MCF 10A (cell line): ENCODE measurements at regions of chr7 and their contacts with region 1.

Region 1: GRCh38 chr7:32357535-32358277 is 132.5 kb downstream of the LSM5 start:
- DNase-seq: peak; percentile 32
- H3K4me3 Mint-ChIP-seq: no peak overlapping the region
- H3K27ac Mint-ChIP-seq: no peak overlapping the region
- H3K4me1 Mint-ChIP-seq: no peaks in the 10 kb centered on the region
- H3K27me3 Mint-ChIP-seq: peaks cover 46% of the 10 kb centered on the region
- CTCF ChIP-seq: peak; percentile 39

Region 2: DNA sequence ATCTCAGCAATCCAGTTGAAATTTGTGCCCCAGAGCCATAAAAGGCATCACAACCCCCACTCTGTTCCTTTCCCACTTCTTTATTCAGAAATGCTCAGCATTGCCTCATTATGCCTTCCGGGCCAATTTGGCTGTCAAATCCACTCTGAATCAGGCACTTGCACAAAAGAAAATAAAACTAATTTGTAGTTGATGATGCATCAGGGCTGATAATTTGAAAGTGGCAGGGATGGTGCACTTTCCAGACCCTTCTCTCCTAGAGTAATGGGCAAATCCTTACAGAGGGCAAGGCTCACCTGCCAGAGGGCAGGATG is 139.6 kb before region 1 on chr7:
- CTCF ChIA-PET with region 1: interaction called, 619 read pairs
- POLR2A ChIA-PET with region 1: no interaction called
- intact Hi-C with region 1: no loop called
- DNase-seq: peak; percentile 27
- H3K4me3 Mint-ChIP-seq: no peak overlapping the region
- H3K27ac Mint-ChIP-seq: no peak overlapping the region
- H3K4me1 Mint-ChIP-seq: no peaks in the 10 kb centered on the region
- H3K27me3 Mint-ChIP-seq: no peaks in the 10 kb centered on the region
- CTCF ChIP-seq: no peak

Region 3: DNA sequence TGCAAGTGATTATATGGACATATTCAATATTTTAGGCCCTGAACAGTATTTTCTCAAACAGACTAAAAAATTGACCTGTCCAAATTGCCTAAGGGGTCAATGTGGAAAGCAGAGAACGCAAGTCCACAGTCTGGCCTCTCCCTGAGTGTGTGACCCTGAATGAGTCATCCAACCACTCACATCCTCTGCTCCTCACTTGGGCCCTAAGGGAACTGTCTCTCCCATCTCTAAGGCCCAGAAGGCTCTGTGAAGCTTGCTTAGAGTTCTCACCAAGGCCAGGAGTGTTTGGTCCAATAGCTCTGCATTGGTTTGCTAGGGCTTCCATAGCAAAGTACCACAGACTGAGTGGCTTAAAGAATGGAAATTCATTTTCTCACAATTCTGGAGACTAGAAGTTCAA is 22.6 kb before region 1 on chr7:
- CTCF ChIA-PET with region 1: interaction called, 23 read pairs
- POLR2A ChIA-PET with region 1: interaction called, 4 read pairs
- intact Hi-C with region 1: no loop called
- DNase-seq: peak; percentile 80
- H3K4me3 Mint-ChIP-seq: no peak overlapping the region
- H3K27ac Mint-ChIP-seq: peak overlapping the region; percentile 26
- H3K4me1 Mint-ChIP-seq: peaks cover 14% of the 10 kb centered on the region
- H3K27me3 Mint-ChIP-seq: no peaks in the 10 kb centered on the region
- CTCF ChIP-seq: no peak

Region 4: GRCh38 chr7:32347244-32347828 is 10.4 kb before region 1 on chr7:
- CTCF ChIA-PET with region 1: interaction called, 49 read pairs
- POLR2A ChIA-PET with region 1: no interaction called
- intact Hi-C with region 1: no loop called
- DNase-seq: peak; percentile 55
- H3K4me3 Mint-ChIP-seq: no peak overlapping the region
- H3K27ac Mint-ChIP-seq: no peak overlapping the region
- H3K4me1 Mint-ChIP-seq: no peaks in the 10 kb centered on the region
- H3K27me3 Mint-ChIP-seq: no peaks in the 10 kb centered on the region
- CTCF ChIP-seq: peak; percentile 75

Region 5: GRCh38 chr7:32479574-32480200 is 122.0 kb after region 1 on chr7:
- CTCF ChIA-PET with region 1: interaction called, 30 read pairs
- POLR2A ChIA-PET with region 1: no interaction called
- intact Hi-C with region 1: no loop called
- DNase-seq: peak; percentile 63
- H3K4me3 Mint-ChIP-seq: no peak overlapping the region
- H3K27ac Mint-ChIP-seq: no peak overlapping the region
- H3K4me1 Mint-ChIP-seq: peaks cover 9% of the 10 kb centered on the region
- H3K27me3 Mint-ChIP-seq: no peaks in the 10 kb centered on the region
- CTCF ChIP-seq: peak; percentile 85